ENCODE measurements at regions of chr7 and their contacts with region 1.

Region 1: GRCh38 chr7:39896840-39897239 is 53.2 kb upstream of the CDK13 start:
- DNase-seq: no peak
- ATAC-seq: no peak
- H3K4me3 ChIP-seq: peak overlapping the region in 1 of 2 experiments; percentile 38; a peak in 1 of 4 replicates
- H3K27ac ChIP-seq: no peak overlapping the region
- H3K4me1 ChIP-seq: no peaks in the 10 kb centered on the region
- H3K27me3 ChIP-seq: no peaks in the 10 kb centered on the region
- CTCF ChIP-seq: no peak
- POLR2A ChIP-seq: no peak
- RAD21 ChIP-seq: no peak

Region 2: GRCh38 chr7:39299695-39300094 is 597.1 kb before region 1 on chr7:
- CTCF ChIA-PET with region 1: no interaction called
- POLR2A ChIA-PET with region 1: no interaction called
- RAD21 ChIA-PET with region 1: no interaction called
- intact Hi-C with region 1: no loop called
- DNase-seq: no peak
- ATAC-seq: no peak
- H3K4me3 ChIP-seq: no peak overlapping the region
- H3K27ac ChIP-seq: no peak overlapping the region
- H3K4me1 ChIP-seq: no peaks in the 10 kb centered on the region
- H3K27me3 ChIP-seq: peaks cover 26% of the 10 kb centered on the region
- CTCF ChIP-seq: no peak
- POLR2A ChIP-seq: no peak
- RAD21 ChIP-seq: no peak

Region 3: GRCh38 chr7:39580149-39580874 is 316.5 kb before region 1 on chr7:
- CTCF ChIA-PET with region 1: interaction called, 15 read pairs
- POLR2A ChIA-PET with region 1: no interaction called
- RAD21 ChIA-PET with region 1: interaction called, 5 read pairs
- intact Hi-C with region 1: no loop called
- DNase-seq: peak; percentile 87
- ATAC-seq: peak; percentile 93
- H3K4me3 ChIP-seq: no peak overlapping the region
- H3K27ac ChIP-seq: no peak overlapping the region
- H3K4me1 ChIP-seq: peaks cover 0 to 5% of the 10 kb centered on the region in 2 experiments; a peak in 1 of 4 replicates
- H3K27me3 ChIP-seq: no peaks in the 10 kb centered on the region
- CTCF ChIP-seq: peak; percentile 73 to 90 (median 85)
- POLR2A ChIP-seq: no peak
- RAD21 ChIP-seq: peak; percentile 96

Region 4: GRCh38 chr7:39882148-39882784 is 14.6 kb before region 1 on chr7:
- CTCF ChIA-PET with region 1: interaction called, 21 read pairs
- POLR2A ChIA-PET with region 1: no interaction called
- RAD21 ChIA-PET with region 1: no interaction called
- intact Hi-C with region 1: no loop called
- DNase-seq: no peak
- ATAC-seq: no peak
- H3K4me3 ChIP-seq: no peak overlapping the region
- H3K27ac ChIP-seq: no peak overlapping the region
- H3K4me1 ChIP-seq: no peaks in the 10 kb centered on the region
- H3K27me3 ChIP-seq: no peaks in the 10 kb centered on the region
- CTCF ChIP-seq: no peak
- POLR2A ChIP-seq: no peak
- RAD21 ChIP-seq: no peak

Region 5: GRCh38 chr7:39910108-39910869 is 13.4 kb after region 1 on chr7:
- CTCF ChIA-PET with region 1: interaction called, 17 read pairs
- POLR2A ChIA-PET with region 1: no interaction called
- RAD21 ChIA-PET with region 1: no interaction called
- intact Hi-C with region 1: no loop called
- DNase-seq: no peak
- ATAC-seq: no peak
- H3K4me3 ChIP-seq: no peak overlapping the region
- H3K27ac ChIP-seq: no peak overlapping the region
- H3K4me1 ChIP-seq: no peaks in the 10 kb centered on the region
- H3K27me3 ChIP-seq: no peaks in the 10 kb centered on the region
- CTCF ChIP-seq: no peak
- POLR2A ChIP-seq: no peak
- RAD21 ChIP-seq: no peak

Region 6: DNA sequence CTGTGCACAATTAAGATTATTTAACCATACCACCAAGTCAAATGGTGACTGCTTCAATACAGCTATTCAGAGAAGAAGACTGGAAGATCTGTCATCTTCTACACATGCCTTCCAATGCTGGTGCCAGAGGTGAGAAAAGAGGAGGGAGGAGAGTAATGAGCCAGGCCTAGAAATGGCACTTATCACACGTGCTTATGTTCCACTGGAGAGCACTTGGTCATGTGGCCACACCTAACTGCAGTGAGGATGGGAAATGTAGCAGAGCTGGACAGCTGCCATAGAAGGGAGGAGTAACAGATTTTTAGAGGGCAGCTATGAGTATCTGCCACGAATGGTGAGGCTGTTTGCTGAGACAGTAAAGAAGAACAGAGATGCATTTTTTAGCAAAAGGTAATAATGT is 160.5 kb after region 1 on chr7:
- CTCF ChIA-PET with region 1: interaction called, 36 read pairs
- POLR2A ChIA-PET with region 1: no interaction called
- RAD21 ChIA-PET with region 1: interaction called in 1 of 2 experiments, 4 read pairs
- intact Hi-C with region 1: loop called (anchors 1 kb)
- DNase-seq: no peak
- ATAC-seq: no peak
- H3K4me3 ChIP-seq: no peak overlapping the region
- H3K27ac ChIP-seq: no peak overlapping the region
- H3K4me1 ChIP-seq: no peaks in the 10 kb centered on the region
- H3K27me3 ChIP-seq: no peaks in the 10 kb centered on the region
- CTCF ChIP-seq: no peak
- POLR2A ChIP-seq: no peak
- RAD21 ChIP-seq: no peak

Region 7: GRCh38 chr7:40147371-40148246 is 250.8 kb after region 1 on chr7:
- CTCF ChIA-PET with region 1: no interaction called
- POLR2A ChIA-PET with region 1: no interaction called
- RAD21 ChIA-PET with region 1: no interaction called
- intact Hi-C with region 1: no loop called
- DNase-seq: no peak
- ATAC-seq: no peak
- H3K4me3 ChIP-seq: no peak overlapping the region
- H3K27ac ChIP-seq: no peak overlapping the region
- H3K4me1 ChIP-seq: peaks cover 0 to 8% of the 10 kb centered on the region in 2 experiments; a peak in 1 of 4 replicates
- H3K27me3 ChIP-seq: no peaks in the 10 kb centered on the region
- CTCF ChIP-seq: peak in 1 of 3 experiments; percentile 7; a peak in 1 of 6 replicates
- POLR2A ChIP-seq: no peak
- RAD21 ChIP-seq: no peak